ENCODE measurements at regions of chr7 and their contacts with region 1.

Region 1: DNA sequence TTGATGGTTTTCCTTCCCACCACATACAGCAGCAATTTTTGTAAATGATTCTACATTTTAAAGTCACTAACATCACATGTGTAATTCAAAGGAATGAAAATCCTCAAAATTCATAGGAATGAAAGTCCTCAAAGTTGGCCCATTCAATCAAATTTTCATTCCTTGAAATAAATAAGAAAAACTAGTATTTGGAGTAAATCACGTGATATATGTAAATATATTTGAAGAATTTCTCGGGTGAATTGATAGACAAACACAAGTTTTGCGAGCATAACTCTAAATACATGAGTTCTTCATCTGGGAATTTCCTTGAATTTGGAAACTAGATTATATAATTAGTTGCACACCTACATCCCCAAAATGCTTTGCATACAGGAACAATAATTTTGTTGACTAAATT is 512.1 kb upstream of the STEAP1 start:
- DNase-seq: no peak
- ATAC-seq: no peak
- H3K4me3 ChIP-seq: no peak overlapping the region
- H3K4me3 Mint-ChIP-seq: no peak overlapping the region
- H3K27ac ChIP-seq: no peak overlapping the region
- H3K27ac Mint-ChIP-seq: no peak overlapping the region
- H3K4me1 ChIP-seq: no peaks in the 10 kb centered on the region
- H3K4me1 Mint-ChIP-seq: no peaks in the 10 kb centered on the region
- H3K27me3 ChIP-seq: no peaks in the 10 kb centered on the region
- H3K27me3 Mint-ChIP-seq: no peaks in the 10 kb centered on the region
- CTCF ChIP-seq: no peak

Region 2: GRCh38 chr7:89593125-89593524 is 49.0 kb before region 1 on chr7:
- CTCF ChIA-PET with region 1: no interaction called
- POLR2A ChIA-PET with region 1: no interaction called
- intact Hi-C with region 1: loop called (anchors 5 kb)
- DNase-seq: no peak
- ATAC-seq: no peak
- H3K4me3 ChIP-seq: no peak overlapping the region
- H3K4me3 Mint-ChIP-seq: no peak overlapping the region
- H3K27ac ChIP-seq: no peak overlapping the region
- H3K27ac Mint-ChIP-seq: no peak overlapping the region
- H3K4me1 ChIP-seq: no peaks in the 10 kb centered on the region
- H3K4me1 Mint-ChIP-seq: no peaks in the 10 kb centered on the region
- H3K27me3 ChIP-seq: no peaks in the 10 kb centered on the region
- H3K27me3 Mint-ChIP-seq: no peaks in the 10 kb centered on the region
- CTCF ChIP-seq: no peak

Region 3: DNA sequence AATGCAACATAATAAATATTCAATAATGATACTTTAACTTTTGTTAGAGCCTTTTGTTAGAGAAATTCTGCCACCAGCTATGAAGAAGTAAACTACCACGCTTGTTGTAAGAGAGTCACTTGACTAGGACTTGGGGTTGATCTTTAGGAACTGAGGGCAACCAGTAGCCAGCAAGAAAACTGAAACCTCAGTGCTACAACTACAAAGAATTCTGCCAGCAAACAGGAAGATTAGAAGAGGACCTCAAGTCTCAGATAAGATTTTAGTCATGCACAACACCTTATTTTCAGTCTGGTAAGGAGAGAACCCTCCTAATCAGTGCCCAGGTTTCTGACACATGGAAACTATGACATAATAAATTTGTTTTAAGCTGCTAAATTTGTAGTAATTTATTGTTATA is 13.8 kb after region 1 on chr7:
- CTCF ChIA-PET with region 1: no interaction called
- POLR2A ChIA-PET with region 1: no interaction called
- intact Hi-C with region 1: no loop called
- DNase-seq: no peak
- ATAC-seq: no peak
- H3K4me3 ChIP-seq: no peak overlapping the region
- H3K4me3 Mint-ChIP-seq: no peak overlapping the region
- H3K27ac ChIP-seq: no peak overlapping the region
- H3K27ac Mint-ChIP-seq: no peak overlapping the region
- H3K4me1 ChIP-seq: no peaks in the 10 kb centered on the region
- H3K4me1 Mint-ChIP-seq: no peaks in the 10 kb centered on the region
- H3K27me3 ChIP-seq: no peaks in the 10 kb centered on the region
- H3K27me3 Mint-ChIP-seq: no peaks in the 10 kb centered on the region
- CTCF ChIP-seq: no peak

Measured in B cell (primary cell).